ENCODE measurements at regions of chr13 and their contacts with region 1.

Region 1: DNA sequence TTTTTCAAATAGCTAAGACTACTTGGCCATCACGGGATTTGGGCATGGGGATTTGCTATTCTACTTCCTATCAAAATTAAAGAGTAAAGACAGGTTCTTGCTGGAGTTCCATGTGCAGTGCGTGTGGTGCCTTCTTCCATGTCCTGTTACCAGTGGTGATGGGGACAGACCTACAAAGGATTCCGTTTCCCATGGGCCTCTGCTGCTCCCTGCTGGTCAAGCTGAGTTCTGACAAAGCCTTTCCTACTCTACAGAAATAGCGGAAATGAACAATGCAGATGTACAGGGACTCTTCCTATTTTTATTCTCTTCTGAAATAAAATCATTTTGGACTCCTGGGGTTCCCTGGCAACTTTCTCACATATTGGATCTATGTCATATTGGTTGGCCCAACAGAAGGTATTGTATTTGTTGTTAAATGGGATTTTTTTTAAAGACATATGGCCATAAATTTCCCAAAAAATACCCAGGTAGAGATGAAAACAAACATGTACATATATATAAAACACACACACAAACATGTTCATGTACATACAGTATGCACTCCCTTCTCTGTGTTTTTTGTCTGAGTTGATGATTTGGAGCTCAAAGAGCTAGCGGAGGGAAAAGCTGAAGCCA is 90.5 kb upstream of the SLC15A1 start:
- DNase-seq: peak in 1 of 2 donors; percentile 23
- ATAC-seq: peak; percentile 56 to 68
- H3K4me3 ChIP-seq: no peak overlapping the region
- H3K27ac ChIP-seq: no peak overlapping the region
- H3K4me1 ChIP-seq: no peaks in the 10 kb centered on the region
- H3K27me3 ChIP-seq: no peaks in the 10 kb centered on the region
- CTCF ChIP-seq: peak; percentile 44 to 77 (median 60)
- POLR2A ChIP-seq: no peak

Region 2: DNA sequence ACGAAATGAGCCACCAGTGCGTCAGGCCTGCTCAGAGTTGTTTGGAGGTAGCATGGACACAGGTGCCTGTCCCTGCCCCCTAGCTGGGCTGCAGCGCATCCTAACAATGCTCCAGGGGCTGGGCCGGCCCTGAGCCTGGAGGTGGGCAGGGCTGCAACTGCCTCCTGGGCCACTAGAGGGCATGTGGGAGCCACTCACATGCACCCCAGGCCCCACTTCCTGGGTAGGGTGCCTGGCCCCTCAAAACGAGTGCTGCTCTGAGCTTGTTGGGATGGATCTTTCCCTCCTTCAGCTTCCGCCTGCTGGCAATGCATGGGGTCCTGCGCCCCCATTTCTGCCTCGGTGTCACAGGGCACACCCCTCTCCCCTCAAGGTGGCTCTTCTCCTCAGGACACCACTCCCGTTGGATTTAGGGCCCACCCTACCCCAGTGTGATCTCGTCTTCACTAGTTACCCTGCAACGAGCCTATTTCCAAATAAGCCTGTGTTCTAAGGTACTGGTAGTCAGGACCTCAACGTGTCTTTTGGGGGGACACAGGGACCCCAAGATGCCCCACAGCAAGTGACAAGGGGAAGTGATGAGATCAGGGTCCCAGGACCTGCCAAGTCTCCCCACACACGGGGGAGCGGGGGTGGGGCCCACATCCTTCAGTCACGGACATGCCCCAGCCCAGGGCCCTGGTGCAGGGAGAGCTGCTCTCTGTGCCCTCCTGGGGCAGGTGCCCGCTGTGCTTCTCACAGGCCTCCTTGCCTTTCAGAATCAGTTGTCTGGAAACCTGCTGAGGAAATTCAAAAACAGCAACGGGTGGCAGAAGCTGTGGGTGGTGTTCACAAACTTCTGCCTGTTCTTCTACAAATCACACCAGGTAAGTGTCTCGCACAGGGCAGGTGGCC is 397.4 kb before region 1 on chr13:
- in situ Hi-C with region 1: loop called in 1 of 4 experiments (anchors 10 kb)
- intact Hi-C with region 1: loop called (anchors 10 kb)
- DNase-seq: peak; percentile 37 to 59
- ATAC-seq: peak; percentile 53 to 65
- H3K4me3 ChIP-seq: no peak overlapping the region
- H3K27ac ChIP-seq: peak overlapping the region in 3 of 4 donors; percentile 14 to 40 (median 17)
- H3K4me1 ChIP-seq: peaks cover 10 to 17% of the 10 kb centered on the region in 2 donors
- H3K27me3 ChIP-seq: no peaks in the 10 kb centered on the region
- CTCF ChIP-seq: peak; percentile 82 to 97 (median 96)
- POLR2A ChIP-seq: no peak

Region 3: DNA sequence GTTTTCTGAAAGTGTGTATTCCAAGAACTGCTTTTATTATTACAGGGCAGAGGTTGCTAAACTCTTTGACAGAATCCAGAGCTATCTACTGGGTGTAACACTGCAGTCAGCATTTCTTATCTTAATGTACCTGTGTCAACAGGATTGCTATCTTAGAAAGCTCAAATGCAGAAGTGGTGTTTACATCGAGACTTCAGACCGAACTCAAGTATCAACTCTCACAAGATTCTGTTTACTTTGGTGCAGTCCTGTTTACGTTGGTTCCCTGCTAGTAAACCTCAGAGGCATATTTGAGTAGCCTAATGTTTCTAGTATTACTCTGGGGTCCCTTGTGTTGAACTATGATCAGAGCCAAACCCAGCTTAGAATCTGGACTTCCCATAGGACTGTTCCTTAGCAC is 111.0 kb before region 1 on chr13:
- in situ Hi-C with region 1: no loop called
- intact Hi-C with region 1: no loop called
- DNase-seq: no peak
- ATAC-seq: no peak
- H3K4me3 ChIP-seq: no peak overlapping the region
- H3K27ac ChIP-seq: no peak overlapping the region
- H3K4me1 ChIP-seq: no peaks in the 10 kb centered on the region
- H3K27me3 ChIP-seq: no peaks in the 10 kb centered on the region
- CTCF ChIP-seq: no peak
- POLR2A ChIP-seq: no peak

Region 4: GRCh38 chr13:98813993-98814392 is 29.0 kb before region 1 on chr13:
- in situ Hi-C with region 1: no loop called
- intact Hi-C with region 1: no loop called
- DNase-seq: no peak
- ATAC-seq: no peak
- H3K4me3 ChIP-seq: no peak overlapping the region
- H3K27ac ChIP-seq: no peak overlapping the region
- H3K4me1 ChIP-seq: no peaks in the 10 kb centered on the region
- H3K27me3 ChIP-seq: no peaks in the 10 kb centered on the region
- CTCF ChIP-seq: no peak
- POLR2A ChIP-seq: no peak

Region 5: GRCh38 chr13:98879957-98880356 is 37.0 kb after region 1 on chr13:
- in situ Hi-C with region 1: no loop called
- intact Hi-C with region 1: loop called (anchors 5 kb)
- DNase-seq: peak; percentile 54 to 69
- ATAC-seq: peak; percentile 83 to 95
- H3K4me3 ChIP-seq: no peak overlapping the region
- H3K27ac ChIP-seq: peak overlapping the region in 3 of 4 donors; percentile 2 to 67 (median 45)
- H3K4me1 ChIP-seq: peaks cover 4 to 11% of the 10 kb centered on the region in 2 donors
- H3K27me3 ChIP-seq: no peaks in the 10 kb centered on the region
- CTCF ChIP-seq: no peak
- POLR2A ChIP-seq: no peak

Region 6: GRCh38 chr13:98890186-98890585 is 47.2 kb after region 1 on chr13:
- in situ Hi-C with region 1: no loop called
- intact Hi-C with region 1: no loop called
- DNase-seq: peak; percentile 43 to 52
- ATAC-seq: peak; percentile 86 to 90
- H3K4me3 ChIP-seq: no peak overlapping the region
- H3K27ac ChIP-seq: peak overlapping the region in 1 of 4 donors; percentile 32
- H3K4me1 ChIP-seq: peaks cover 0 to 6% of the 10 kb centered on the region in 2 donors
- H3K27me3 ChIP-seq: no peaks in the 10 kb centered on the region
- CTCF ChIP-seq: no peak
- POLR2A ChIP-seq: no peak

Region 7: DNA sequence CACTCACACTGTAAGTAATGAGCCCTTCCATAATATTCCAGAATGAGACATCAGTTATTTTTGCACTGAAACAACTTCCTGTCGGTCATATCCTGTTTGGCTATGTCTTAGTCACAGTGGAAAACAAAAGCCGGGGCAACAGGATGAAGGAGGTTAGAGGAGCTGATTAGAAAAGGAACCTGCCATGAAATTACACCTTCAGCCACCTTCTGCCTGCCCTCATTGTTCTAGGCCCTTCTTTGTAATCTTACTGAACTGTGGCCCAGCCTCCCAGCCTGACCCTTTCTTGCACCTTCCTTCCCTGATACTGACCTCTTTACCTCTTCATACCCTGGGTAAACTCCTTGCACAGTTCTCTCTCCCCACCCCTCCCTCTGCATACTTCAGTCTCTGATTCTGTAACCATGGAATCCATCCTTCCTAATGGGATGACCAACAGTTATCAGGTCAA is 67.6 kb after region 1 on chr13:
- in situ Hi-C with region 1: no loop called
- intact Hi-C with region 1: no loop called
- DNase-seq: no peak
- ATAC-seq: peak; percentile 70 to 77
- H3K4me3 ChIP-seq: no peak overlapping the region
- H3K27ac ChIP-seq: peak overlapping the region; percentile 62 to 78 (median 69)
- H3K4me1 ChIP-seq: peaks cover 8 to 20% of the 10 kb centered on the region in 2 donors
- H3K27me3 ChIP-seq: no peaks in the 10 kb centered on the region
- CTCF ChIP-seq: no peak
- POLR2A ChIP-seq: peak in 1 of 2 donors; percentile 27

Region 8: GRCh38 chr13:99033814-99034213 is 190.8 kb after region 1 on chr13:
- in situ Hi-C with region 1: loop called in 2 of 4 experiments (anchors 10 kb)
- intact Hi-C with region 1: loop called (anchors 1 kb)
- DNase-seq: no peak
- ATAC-seq: peak in 1 of 2 donors; percentile 58
- H3K4me3 ChIP-seq: no peak overlapping the region
- H3K27ac ChIP-seq: no peak overlapping the region
- H3K4me1 ChIP-seq: no peaks in the 10 kb centered on the region
- H3K27me3 ChIP-seq: no peaks in the 10 kb centered on the region
- CTCF ChIP-seq: peak; percentile 23 to 58 (median 38)
- POLR2A ChIP-seq: no peak